Psoas muscle (tissue), 8 donors: ENCODE measurements at regions of chr11 and their contacts with region 1.

Region 1: GRCh38 chr11:27472398-27473016 is at the start of gene LGR4:
- DNase-seq: peak; percentile 91 to 93
- ATAC-seq: peak; percentile 94 to 97 (median 95)
- H3K4me3 ChIP-seq: peak within 1 kb of the TSS; percentile 88
- H3K27ac ChIP-seq: peak within 1 kb of the TSS; percentile 82
- H3K4me1 ChIP-seq: peaks cover 31% of the 10 kb centered on the region
- H3K27me3 ChIP-seq: no peaks in the 10 kb centered on the region
- CTCF ChIP-seq: no peak
- total RNA-seq, gene LGR4: 8.0 to 15.2 (median 8.6) TPM

Region 2: GRCh38 chr11:27362749-27363575 is 109.5 kb before region 1 on chr11 and contains the start of gene CCDC34:
- intact Hi-C with region 1: loop called (anchors 5 to 10 kb)
- DNase-seq: peak; percentile 91 to 94
- ATAC-seq: peak; percentile 98 to 100 (median 99)
- H3K4me3 ChIP-seq: peak within 1 kb of the TSS; percentile 88
- H3K27ac ChIP-seq: peak within 1 kb of the TSS; percentile 56
- H3K4me1 ChIP-seq: peaks cover 5% of the 10 kb centered on the region
- H3K27me3 ChIP-seq: no peaks in the 10 kb centered on the region
- CTCF ChIP-seq: no peak
- total RNA-seq, gene CCDC34: 2.1 to 5.2 (median 3.1) TPM

Region 3: GRCh38 chr11:27381238-27381666 is 91.3 kb before region 1 on chr11:
- intact Hi-C with region 1: no loop called
- DNase-seq: no peak
- ATAC-seq: no peak
- H3K4me3 ChIP-seq: no peak overlapping the region
- H3K27ac ChIP-seq: no peak overlapping the region
- H3K4me1 ChIP-seq: no peaks in the 10 kb centered on the region
- H3K27me3 ChIP-seq: no peaks in the 10 kb centered on the region
- CTCF ChIP-seq: no peak

Region 4: DNA sequence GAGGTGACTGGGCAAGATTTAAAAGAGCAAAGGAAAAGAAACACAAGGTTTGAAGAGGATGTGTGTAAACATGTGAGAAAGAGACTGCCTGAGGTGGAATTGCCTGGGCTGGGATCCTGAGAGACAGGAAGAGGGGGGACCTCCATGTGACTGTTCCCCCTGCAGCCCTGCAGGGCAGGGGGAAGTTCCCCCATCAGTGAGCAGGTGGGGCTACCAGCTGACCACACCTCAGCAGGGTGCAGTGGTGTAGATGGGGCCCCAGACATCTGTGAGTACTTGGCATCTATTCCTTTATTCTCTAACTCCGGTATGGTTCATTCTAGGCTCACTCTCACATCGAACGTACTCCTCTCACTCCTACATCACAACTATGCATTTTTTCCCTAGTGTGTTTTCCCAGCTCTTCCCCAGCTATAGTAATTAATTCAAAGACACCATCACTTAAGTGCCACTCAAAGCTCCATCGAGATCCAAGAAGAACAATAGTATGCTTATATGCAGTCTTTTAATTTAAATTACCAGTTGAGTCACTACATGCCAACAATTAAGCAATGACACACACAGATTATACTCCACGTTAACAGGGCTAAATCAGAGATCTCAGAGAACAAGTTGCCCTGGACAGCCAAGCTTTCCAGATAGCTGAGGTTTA is 42.6 kb before region 1 on chr11:
- intact Hi-C with region 1: loop called (anchors 2 to 5 kb)
- DNase-seq: no peak
- ATAC-seq: no peak
- H3K4me3 ChIP-seq: no peak overlapping the region
- H3K27ac ChIP-seq: no peak overlapping the region
- H3K4me1 ChIP-seq: peaks cover 17% of the 10 kb centered on the region
- H3K27me3 ChIP-seq: no peaks in the 10 kb centered on the region
- CTCF ChIP-seq: no peak

Region 5: GRCh38 chr11:27456140-27456794 is 16.2 kb before region 1 on chr11:
- intact Hi-C with region 1: no loop called
- DNase-seq: no peak
- ATAC-seq: no peak
- H3K4me3 ChIP-seq: no peak overlapping the region
- H3K27ac ChIP-seq: no peak overlapping the region
- H3K4me1 ChIP-seq: peaks cover 8% of the 10 kb centered on the region
- H3K27me3 ChIP-seq: no peaks in the 10 kb centered on the region
- CTCF ChIP-seq: no peak

Region 6: GRCh38 chr11:27506200-27507182 is 34.0 kb after region 1 on chr11 and contains the start of gene LIN7C:
- intact Hi-C with region 1: loop called in 1 of 2 experiments (anchors 2 kb)
- DNase-seq: peak; percentile 96 to 97
- ATAC-seq: peak; percentile 99
- H3K4me3 ChIP-seq: peak within 1 kb of the TSS; percentile 89
- H3K27ac ChIP-seq: peak within 1 kb of the TSS; percentile 94
- H3K4me1 ChIP-seq: peaks cover 46% of the 10 kb centered on the region
- H3K27me3 ChIP-seq: no peaks in the 10 kb centered on the region
- CTCF ChIP-seq: no peak
- total RNA-seq, gene LIN7C: 13.1 to 18.9 (median 14.7) TPM